CD8-positive, alpha-beta memory T cell (primary cell): ENCODE measurements at regions of chr6 and their contacts with region 1.

Region 1: GRCh38 chr6:41920921-41921711 is at the starts of genes BYSL and MED20:
- DNase-seq: peak; percentile 91 to 95 (median 93)
- H3K4me3 ChIP-seq: peak within 1 kb of the TSS; percentile 97
- H3K4me3 Mint-ChIP-seq: peak within 1 kb of the TSS; percentile 96 to 100 (median 99)
- H3K27ac ChIP-seq: peak within 1 kb of the TSS; percentile 96
- H3K27ac Mint-ChIP-seq: peak within 1 kb of the TSS; percentile 98 to 100 (median 99)
- H3K4me1 ChIP-seq: peaks cover 38% of the 10 kb centered on the region
- H3K4me1 Mint-ChIP-seq: peaks cover 53 to 62% (median 62%) of the 10 kb centered on the region in 3 donors
- H3K27me3 ChIP-seq: no peaks in the 10 kb centered on the region
- H3K27me3 Mint-ChIP-seq: peaks cover 0 to 9% of the 10 kb centered on the region in 2 donors
- total RNA-seq, gene BYSL: 80.5 to 84.4 TPM
- total RNA-seq, gene MED20: 18.1 to 21.1 TPM

Region 2: GRCh38 chr6:41080621-41081020 is 840.5 kb before region 1 on chr6:
- CTCF ChIA-PET with region 1: no interaction called
- POLR2A ChIA-PET with region 1: no interaction called
- DNase-seq: peak in 3 of 5 donors; percentile 4 to 49 (median 41)
- H3K4me3 ChIP-seq: peak overlapping the region; percentile 23
- H3K4me3 Mint-ChIP-seq: peak overlapping the region; percentile 59 to 85 (median 77)
- H3K27ac ChIP-seq: no peak overlapping the region
- H3K27ac Mint-ChIP-seq: peak overlapping the region; percentile 49 to 94 (median 88)
- H3K4me1 ChIP-seq: peaks cover 38% of the 10 kb centered on the region
- H3K4me1 Mint-ChIP-seq: peaks cover 61 to 85% (median 82%) of the 10 kb centered on the region in 3 donors
- H3K27me3 ChIP-seq: no peaks in the 10 kb centered on the region
- H3K27me3 Mint-ChIP-seq: no peaks in the 10 kb centered on the region

Region 3: DNA sequence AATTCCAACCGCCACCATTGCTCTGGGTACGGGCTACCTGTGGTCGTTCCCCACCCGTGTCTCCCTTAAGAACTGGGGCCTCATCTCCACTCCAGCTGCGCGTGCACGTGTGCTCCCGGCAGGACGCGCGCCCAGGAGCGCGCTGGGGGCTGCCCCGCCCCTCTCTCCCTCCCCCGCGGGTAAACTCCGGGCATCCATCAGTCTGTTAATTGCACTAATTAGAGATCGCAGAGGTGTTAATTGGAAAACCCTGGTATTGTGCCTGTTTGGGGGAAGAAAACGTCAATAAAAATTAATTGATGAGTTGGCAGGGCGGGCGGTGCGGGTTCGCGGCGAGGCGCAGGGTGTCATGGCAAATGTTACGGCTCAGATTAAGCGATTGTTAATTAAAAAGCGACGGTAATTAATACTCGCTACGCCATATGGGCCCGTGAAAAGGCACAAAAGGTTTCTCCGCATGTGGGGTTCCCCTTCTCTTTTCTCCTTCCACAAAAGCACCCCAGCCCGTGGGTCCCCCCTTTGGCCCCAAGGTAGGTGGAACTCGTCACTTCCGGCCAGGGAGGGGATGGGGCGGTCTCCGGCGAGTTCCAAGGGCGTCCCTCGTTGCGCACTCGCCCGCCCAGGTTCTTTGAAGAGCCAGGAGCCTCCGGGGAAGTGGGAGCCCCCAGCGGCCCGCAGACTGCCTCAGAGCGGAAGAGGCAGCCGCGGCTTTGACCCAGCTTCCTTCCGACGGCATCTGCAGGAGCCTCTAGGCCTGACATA is 360.5 kb before region 1 on chr6:
- CTCF ChIA-PET with region 1: no interaction called
- POLR2A ChIA-PET with region 1: no interaction called
- DNase-seq: peak; percentile 84 to 94 (median 91)
- H3K4me3 ChIP-seq: peak overlapping the region; percentile 80
- H3K4me3 Mint-ChIP-seq: peak overlapping the region; percentile 82 to 95 (median 87)
- H3K27ac ChIP-seq: peak overlapping the region; percentile 64
- H3K27ac Mint-ChIP-seq: peak overlapping the region; percentile 75 to 99 (median 95)
- H3K4me1 ChIP-seq: peaks cover 21% of the 10 kb centered on the region
- H3K4me1 Mint-ChIP-seq: peaks cover 31 to 38% (median 35%) of the 10 kb centered on the region in 3 donors
- H3K27me3 ChIP-seq: no peaks in the 10 kb centered on the region
- H3K27me3 Mint-ChIP-seq: peaks cover 0 to 2% of the 10 kb centered on the region in 2 donors

Region 4: GRCh38 chr6:41787219-41787917 is 133.7 kb before region 1 on chr6 and contains the start of gene TOMM6:
- CTCF ChIA-PET with region 1: interaction called, 51 read pairs
- POLR2A ChIA-PET with region 1: interaction called, 29 read pairs
- DNase-seq: peak; percentile 92 to 96 (median 93)
- H3K4me3 ChIP-seq: peak within 1 kb of the TSS; percentile 100
- H3K4me3 Mint-ChIP-seq: peak within 1 kb of the TSS; percentile 94 to 97 (median 96)
- H3K27ac ChIP-seq: peak within 1 kb of the TSS; percentile 97
- H3K27ac Mint-ChIP-seq: peak within 1 kb of the TSS; percentile 94 to 99 (median 98)
- H3K4me1 ChIP-seq: peaks cover 7% of the 10 kb centered on the region
- H3K4me1 Mint-ChIP-seq: peaks cover 9 to 32% (median 21%) of the 10 kb centered on the region in 3 donors
- H3K27me3 ChIP-seq: no peaks in the 10 kb centered on the region
- H3K27me3 Mint-ChIP-seq: no peaks in the 10 kb centered on the region
- total RNA-seq, gene TOMM6: 399 to 414 TPM

Region 5: GRCh38 chr6:41895300-41896233 is 25.5 kb before region 1 on chr6 and contains the start of gene USP49:
- CTCF ChIA-PET with region 1: interaction called, 11 read pairs
- POLR2A ChIA-PET with region 1: interaction called, 12 read pairs
- DNase-seq: peak; percentile 85 to 95 (median 89)
- H3K4me3 ChIP-seq: peak within 1 kb of the TSS; percentile 71
- H3K4me3 Mint-ChIP-seq: no peak within 1 kb of the TSS
- H3K27ac ChIP-seq: peak within 1 kb of the TSS; percentile 58
- H3K27ac Mint-ChIP-seq: peak within 1 kb of the TSS; percentile 57 to 98 (median 93)
- H3K4me1 ChIP-seq: peaks cover 24% of the 10 kb centered on the region
- H3K4me1 Mint-ChIP-seq: peaks cover 9 to 13% (median 11%) of the 10 kb centered on the region in 3 donors
- H3K27me3 ChIP-seq: no peaks in the 10 kb centered on the region
- H3K27me3 Mint-ChIP-seq: no peaks in the 10 kb centered on the region
- total RNA-seq, gene USP49: 5.0 to 5.2 TPM

Region 6: DNA sequence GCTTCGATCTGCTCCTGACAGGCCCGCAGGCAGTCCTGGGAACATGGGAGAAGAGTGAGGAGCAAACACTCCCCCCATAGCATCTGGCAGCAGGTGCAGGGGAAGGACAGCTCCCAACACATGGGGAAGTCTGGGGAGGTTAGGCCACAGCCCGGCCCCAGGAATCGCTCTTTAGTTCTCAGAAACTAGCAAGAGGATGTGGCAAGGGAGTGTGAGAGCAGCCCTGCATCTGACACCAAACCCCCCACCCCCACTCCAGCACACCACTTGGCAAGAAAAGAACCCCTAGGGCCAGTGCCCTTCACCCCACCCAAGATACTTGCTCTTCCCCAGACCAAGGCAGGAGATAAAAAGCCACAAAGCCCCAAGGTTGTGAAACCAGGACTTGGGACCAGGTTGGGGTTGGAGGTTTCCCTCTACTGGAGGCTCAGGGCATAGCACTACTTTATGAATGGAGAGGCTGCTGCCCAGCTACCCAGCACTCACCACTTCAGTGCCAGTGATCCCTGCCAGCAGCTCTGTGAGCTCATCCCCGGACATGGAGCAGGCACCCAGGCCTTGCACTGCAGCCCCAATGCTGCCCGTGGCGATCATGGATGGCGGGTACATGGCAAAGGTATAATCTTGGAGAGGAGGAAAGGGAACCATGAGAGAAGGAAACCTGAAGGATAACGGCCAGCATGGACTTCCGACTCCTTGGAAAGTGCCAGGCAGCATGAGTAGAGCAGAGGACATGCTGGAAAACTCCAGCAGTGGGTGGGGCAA is 15.1 kb after region 1 on chr6:
- CTCF ChIA-PET with region 1: interaction called, 78 read pairs
- POLR2A ChIA-PET with region 1: interaction called, 24 read pairs
- DNase-seq: peak; percentile 67 to 89 (median 73)
- H3K4me3 ChIP-seq: peak overlapping the region; percentile 53
- H3K4me3 Mint-ChIP-seq: peak overlapping the region; percentile 76 to 97 (median 94)
- H3K27ac ChIP-seq: peak overlapping the region; percentile 40
- H3K27ac Mint-ChIP-seq: peak overlapping the region; percentile 81 to 98 (median 94)
- H3K4me1 ChIP-seq: peaks cover 62% of the 10 kb centered on the region
- H3K4me1 Mint-ChIP-seq: peaks cover 71 to 80% (median 76%) of the 10 kb centered on the region in 3 donors
- H3K27me3 ChIP-seq: no peaks in the 10 kb centered on the region
- H3K27me3 Mint-ChIP-seq: peaks cover 0 to 2% of the 10 kb centered on the region in 2 donors

Region 7: GRCh38 chr6:41941280-41942066 is 20.4 kb after region 1 on chr6 and contains the start of gene CCND3:
- CTCF ChIA-PET with region 1: interaction called, 78 read pairs
- POLR2A ChIA-PET with region 1: interaction called, 24 read pairs
- DNase-seq: peak; percentile 75 to 88 (median 80)
- H3K4me3 ChIP-seq: peak within 1 kb of the TSS; percentile 84
- H3K4me3 Mint-ChIP-seq: peak within 1 kb of the TSS; percentile 90 to 97 (median 95)
- H3K27ac ChIP-seq: peak within 1 kb of the TSS; percentile 73
- H3K27ac Mint-ChIP-seq: peak within 1 kb of the TSS; percentile 81 to 98 (median 96)
- H3K4me1 ChIP-seq: peaks cover 65% of the 10 kb centered on the region
- H3K4me1 Mint-ChIP-seq: peaks cover 61 to 80% (median 63%) of the 10 kb centered on the region in 3 donors
- H3K27me3 ChIP-seq: no peaks in the 10 kb centered on the region
- H3K27me3 Mint-ChIP-seq: peaks cover 0 to 2% of the 10 kb centered on the region in 2 donors
- total RNA-seq, gene CCND3: 283 to 287 TPM